ENCODE measurements at regions of chr2 and their contacts with region 1.

Region 1: DNA sequence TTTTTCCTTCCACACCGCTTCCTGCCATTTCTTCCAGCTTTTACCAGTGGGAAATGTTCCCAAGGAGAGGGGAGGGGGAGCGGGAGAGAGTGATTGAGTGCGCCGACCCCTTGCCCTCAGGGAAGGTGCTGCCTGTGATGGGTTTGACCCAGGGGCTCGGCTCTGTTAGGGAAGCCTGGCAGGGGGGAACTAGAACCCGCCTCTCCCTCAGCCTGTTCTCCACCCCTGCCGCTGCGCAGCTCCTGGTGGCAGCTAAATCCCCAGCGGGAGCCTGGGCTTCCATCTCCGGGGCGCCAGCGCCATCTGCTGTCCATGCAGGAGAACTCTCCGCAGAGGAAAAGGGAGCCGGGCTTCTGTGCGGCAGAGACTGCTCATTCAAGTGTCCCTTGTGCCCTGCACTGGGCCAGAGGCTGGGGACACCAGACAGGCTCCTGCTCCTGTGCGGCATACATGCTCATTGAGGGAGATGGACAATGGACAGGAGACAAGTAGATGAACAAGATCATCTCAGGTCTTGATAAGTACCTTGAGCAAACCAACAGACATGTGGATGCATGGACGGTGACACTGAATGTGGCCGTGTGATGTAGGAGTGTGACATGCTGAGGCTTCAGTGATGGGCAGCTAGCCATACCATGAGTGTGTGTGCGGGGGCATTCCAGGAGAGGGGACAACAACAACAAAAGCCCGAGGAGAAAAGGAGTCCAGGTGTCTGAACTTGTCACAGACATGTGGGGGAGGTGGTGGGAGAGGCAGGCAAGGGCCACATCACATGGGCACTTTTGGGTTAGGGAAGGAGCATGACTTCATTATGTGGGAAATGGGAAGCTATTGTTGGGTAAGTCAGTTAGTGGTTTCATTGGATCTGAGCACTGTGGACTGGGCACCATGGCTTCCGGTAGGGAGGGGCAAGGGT is 13.3 kb downstream of the CHPF start:
- DNase-seq: peak; percentile 86
- ATAC-seq: peak; percentile 91
- H3K4me3 Mint-ChIP-seq: no peak overlapping the region
- H3K27ac Mint-ChIP-seq: no peak overlapping the region
- H3K4me1 Mint-ChIP-seq: no peaks in the 10 kb centered on the region
- H3K27me3 Mint-ChIP-seq: peaks cover 46% of the 10 kb centered on the region

Region 2: DNA sequence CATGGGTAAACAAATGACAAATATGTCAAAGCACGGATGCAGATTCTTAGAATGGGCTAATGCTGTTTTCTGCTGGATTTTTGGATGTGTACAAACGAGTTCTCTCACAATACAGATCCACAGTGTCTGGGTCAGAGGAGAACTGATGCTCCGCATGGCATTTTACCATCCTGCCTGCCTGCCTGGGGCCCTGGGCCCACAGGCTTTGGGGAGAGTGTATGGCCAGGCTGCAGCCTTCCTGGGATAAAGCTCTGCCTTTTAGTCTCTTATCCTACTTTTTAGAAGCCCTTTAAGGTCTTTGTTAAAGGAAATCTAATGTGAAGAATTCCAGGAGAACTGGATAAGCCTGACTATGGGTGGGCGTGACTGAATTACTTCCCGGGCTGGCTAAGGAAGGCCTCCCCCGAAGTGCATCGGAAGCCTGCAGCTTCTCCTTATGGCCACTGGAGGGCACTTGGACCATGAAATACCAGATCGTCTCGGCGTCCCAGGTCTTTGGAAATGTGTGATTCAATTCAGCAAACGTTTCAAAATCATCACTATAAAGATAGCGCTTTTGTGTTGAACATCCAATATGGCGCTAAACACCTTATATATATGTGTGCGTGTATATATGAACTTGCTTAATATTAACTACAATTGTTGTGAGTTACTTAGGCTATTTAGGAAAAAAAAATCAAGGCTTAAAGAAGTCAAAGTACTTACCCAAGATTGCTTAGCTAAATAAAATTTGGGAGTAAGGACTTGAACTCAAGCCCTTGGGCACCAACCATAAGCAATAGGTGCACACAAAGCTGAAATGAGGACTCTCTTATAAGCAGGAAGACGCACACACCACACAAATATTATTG is 127.4 kb before region 1 on chr2:
- CTCF ChIA-PET with region 1: interaction called, 112 read pairs
- DNase-seq: peak; percentile 71
- ATAC-seq: peak; percentile 91
- H3K4me3 Mint-ChIP-seq: no peak overlapping the region
- H3K27ac Mint-ChIP-seq: no peak overlapping the region
- H3K4me1 Mint-ChIP-seq: no peaks in the 10 kb centered on the region
- H3K27me3 Mint-ChIP-seq: peaks cover 14% of the 10 kb centered on the region

Region 3: DNA sequence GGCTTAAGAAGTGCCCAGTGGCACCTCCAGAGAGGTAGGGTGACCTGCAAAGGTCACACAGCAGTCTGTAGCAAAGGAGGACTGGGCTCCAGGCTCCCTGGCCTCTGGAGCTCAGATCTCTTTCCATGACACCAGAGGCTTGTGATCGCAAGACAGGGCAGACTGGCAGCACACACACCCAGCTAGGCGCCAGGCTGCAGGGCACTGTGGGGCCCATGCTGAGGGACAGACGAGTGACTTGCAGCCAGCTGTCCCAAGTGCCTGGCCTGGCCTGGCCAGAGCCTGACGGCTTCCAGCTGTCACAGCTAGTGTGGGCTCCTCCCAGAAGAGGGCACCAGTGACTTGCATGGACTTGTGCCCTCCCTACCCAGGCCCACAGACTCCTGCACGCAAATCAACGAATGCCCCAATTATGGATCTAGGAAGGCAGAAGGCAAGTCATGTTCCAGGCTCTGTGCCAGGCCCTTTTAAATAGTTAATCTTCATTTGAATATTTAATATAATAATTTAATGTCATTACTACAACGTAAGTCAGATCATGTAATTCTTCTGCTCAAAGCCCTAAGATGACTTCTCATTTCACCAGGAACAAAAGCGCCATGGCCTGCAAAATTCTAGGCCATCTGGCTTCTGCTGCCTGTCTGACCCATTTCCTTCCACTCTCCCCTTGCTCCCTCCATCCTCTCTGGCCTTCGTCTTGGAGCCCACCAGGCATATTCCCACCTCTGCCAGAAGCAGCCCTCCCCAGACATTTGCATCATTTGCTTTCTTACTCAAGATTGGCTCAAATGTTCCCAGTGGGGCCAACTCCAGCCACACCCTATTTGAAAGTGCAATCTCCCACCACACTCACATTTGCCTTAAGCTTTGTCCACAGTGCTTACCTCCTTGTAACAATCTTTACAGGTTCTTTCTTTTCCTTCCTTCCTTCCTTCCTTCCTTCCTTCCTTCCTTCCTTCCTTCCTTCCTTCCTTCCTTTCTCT is 99.4 kb before region 1 on chr2:
- CTCF ChIA-PET with region 1: interaction called, 10 read pairs
- DNase-seq: no peak
- ATAC-seq: no peak
- H3K4me3 Mint-ChIP-seq: no peak overlapping the region
- H3K27ac Mint-ChIP-seq: no peak overlapping the region
- H3K4me1 Mint-ChIP-seq: no peaks in the 10 kb centered on the region
- H3K27me3 Mint-ChIP-seq: peaks cover 27% of the 10 kb centered on the region

Region 4: DNA sequence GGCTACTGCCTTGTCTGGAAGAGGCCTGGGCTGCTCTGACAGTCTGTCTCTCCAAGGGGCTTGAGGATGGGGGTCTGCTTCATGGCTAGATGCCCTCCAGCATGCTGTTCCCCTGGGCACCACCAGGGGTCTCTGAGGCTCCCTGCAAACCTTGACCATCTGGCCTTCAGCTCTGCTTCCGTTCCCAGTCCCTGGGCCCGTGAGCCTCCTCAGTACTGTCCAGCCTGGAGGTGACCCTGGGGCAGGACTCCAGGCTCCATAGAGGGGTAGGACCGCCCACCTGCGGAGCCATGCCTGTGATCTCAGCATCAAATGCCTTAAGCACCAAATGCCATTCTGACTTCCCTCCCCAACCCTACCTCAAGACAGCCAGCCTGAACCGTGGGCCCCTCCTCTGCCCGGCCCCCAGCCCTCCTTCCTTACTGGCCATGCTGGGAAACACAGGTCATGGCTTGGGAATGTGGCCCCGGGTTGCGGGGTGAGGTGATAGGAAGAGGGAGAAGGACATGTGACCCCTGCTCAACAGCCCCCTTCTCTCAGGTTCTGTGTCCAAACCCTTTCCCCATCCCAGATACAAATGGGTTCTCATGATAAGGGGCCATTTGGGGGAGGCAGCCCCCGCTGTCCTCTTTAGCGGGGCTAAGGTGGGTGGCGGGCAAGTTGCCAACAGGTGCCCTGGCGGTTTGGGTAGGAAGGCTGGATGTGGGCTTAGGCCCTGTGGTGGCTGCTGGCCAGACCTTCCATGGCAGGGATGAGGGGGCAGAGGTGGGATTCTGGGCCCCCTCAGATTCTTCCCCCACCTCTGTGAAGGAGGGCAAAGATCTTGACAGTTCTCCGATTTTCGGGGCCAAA is 70.6 kb before region 1 on chr2:
- CTCF ChIA-PET with region 1: interaction called, 23 read pairs
- DNase-seq: peak; percentile 51
- ATAC-seq: peak; percentile 45
- H3K4me3 Mint-ChIP-seq: no peak overlapping the region
- H3K27ac Mint-ChIP-seq: no peak overlapping the region
- H3K4me1 Mint-ChIP-seq: peaks cover 15% of the 10 kb centered on the region
- H3K27me3 Mint-ChIP-seq: no peaks in the 10 kb centered on the region

Region 5: DNA sequence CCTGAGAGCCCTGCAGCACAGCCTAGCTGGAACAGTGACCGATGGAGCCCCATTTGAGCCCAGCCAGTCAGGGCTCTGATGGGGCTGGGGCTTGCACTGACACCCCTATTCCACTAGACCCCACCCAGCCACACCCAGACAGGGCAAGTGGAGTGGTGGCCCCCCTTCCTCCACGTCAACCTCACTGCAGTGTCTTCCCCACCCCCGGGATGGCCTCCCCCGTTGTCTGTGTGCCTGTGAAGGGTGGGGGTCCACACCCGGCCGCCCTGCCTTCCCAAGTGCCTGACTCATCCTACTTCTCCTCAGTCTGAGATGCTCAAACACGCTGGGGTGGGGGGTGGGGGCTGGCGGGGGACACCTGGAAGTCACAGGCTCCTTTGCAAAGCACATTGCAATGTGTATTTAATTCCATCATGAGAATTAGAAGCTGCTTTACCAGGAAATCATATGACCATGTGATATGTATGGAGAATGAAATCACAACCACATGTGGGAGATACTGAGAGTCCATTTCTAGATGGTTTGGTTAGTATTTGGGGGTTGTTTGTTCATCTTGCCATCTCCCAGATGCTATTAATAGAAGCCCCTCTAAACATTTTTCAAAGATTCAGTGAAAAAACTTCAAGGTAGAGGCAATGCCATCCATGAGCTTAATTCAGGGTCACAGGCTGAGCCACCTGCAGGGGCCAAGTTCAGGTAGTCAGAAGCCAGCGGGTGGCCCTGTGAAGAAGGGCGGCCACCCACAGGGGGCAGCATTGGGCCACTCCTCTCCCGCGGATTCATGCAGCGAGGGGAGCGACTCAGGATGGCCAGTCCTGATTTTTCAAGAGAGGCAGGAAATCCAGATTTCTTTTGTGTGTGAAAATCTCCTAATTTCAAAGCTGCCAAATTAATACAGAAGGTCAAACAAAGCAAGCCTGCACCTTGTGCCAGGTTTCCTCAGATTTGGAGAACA is 54.3 kb before region 1 on chr2:
- CTCF ChIA-PET with region 1: interaction called, 40 read pairs
- DNase-seq: peak; percentile 70
- ATAC-seq: peak; percentile 77
- H3K4me3 Mint-ChIP-seq: no peak overlapping the region
- H3K27ac Mint-ChIP-seq: no peak overlapping the region
- H3K4me1 Mint-ChIP-seq: no peaks in the 10 kb centered on the region
- H3K27me3 Mint-ChIP-seq: no peaks in the 10 kb centered on the region

Region 6: DNA sequence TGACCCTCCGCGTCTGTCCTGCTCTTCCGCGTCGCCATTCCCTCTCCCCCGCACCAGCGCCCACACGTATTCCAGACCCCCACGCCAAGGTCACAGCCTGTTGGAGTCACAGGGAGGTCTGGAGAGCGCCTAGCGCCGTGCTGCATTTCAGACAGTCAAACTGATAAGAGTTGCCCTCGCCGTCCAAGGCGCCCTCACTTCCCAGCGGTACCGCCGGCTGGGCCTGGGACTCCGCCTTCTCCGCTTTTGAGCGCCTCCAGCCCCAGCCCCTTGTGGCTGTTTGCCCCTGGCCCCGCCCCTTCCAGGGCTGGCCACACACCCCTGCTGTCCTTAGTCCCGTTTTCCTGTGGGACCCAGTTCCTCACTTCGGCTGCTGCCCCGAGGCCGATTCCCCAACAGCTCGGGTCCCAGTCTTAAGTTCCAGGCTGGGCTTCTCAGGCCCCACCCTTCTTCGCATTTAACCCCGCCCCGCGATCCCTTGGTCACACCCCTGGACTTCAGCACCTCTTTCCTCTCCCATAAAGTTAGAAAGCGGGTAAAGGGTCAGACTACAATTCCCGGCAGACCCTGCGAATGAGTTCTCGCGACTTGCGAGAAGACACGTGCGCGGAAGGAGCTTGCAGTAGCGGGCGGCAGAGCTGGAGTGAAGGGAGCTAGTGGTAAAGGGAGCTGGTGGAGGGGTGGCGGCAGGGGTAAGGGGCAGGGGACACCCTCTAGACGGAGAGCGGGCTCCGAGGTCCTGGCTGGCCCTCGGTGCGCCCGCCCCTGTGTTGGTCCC is 31.8 kb before region 1 on chr2 and contains the start of gene GMPPA:
- CTCF ChIA-PET with region 1: interaction called, 149 read pairs
- DNase-seq: peak; percentile 98
- ATAC-seq: peak; percentile 94
- H3K4me3 Mint-ChIP-seq: peak within 1 kb of the TSS; percentile 87
- H3K27ac Mint-ChIP-seq: peak within 1 kb of the TSS; percentile 78
- H3K4me1 Mint-ChIP-seq: peaks cover 31% of the 10 kb centered on the region
- H3K27me3 Mint-ChIP-seq: peaks cover 40% of the 10 kb centered on the region
- total RNA-seq, gene GMPPA: 36.5 to 42.6 TPM

Region 7: GRCh38 chr2:219509780-219510511 is 20.4 kb before region 1 on chr2:
- CTCF ChIA-PET with region 1: interaction called, 14 read pairs
- DNase-seq: peak; percentile 54
- ATAC-seq: peak; percentile 80
- H3K4me3 Mint-ChIP-seq: no peak overlapping the region
- H3K27ac Mint-ChIP-seq: no peak overlapping the region
- H3K4me1 Mint-ChIP-seq: peaks cover 4% of the 10 kb centered on the region
- H3K27me3 Mint-ChIP-seq: peaks cover 44% of the 10 kb centered on the region

Region 8: GRCh38 chr2:219627103-219628100 is 97.1 kb after region 1 on chr2 and contains the start of gene SLC4A3:
- CTCF ChIA-PET with region 1: no interaction called
- DNase-seq: no peak
- ATAC-seq: peak; percentile 75
- H3K4me3 Mint-ChIP-seq: no peak within 1 kb of the TSS
- H3K27ac Mint-ChIP-seq: no peak within 1 kb of the TSS
- H3K4me1 Mint-ChIP-seq: peaks cover 4% of the 10 kb centered on the region
- H3K27me3 Mint-ChIP-seq: peaks cover 35% of the 10 kb centered on the region
- total RNA-seq, gene SLC4A3: not detected